Endothelial cell of umbilical vein (primary cell): ENCODE measurements at regions of chr17 and their contacts with region 1.

Region 1: DNA sequence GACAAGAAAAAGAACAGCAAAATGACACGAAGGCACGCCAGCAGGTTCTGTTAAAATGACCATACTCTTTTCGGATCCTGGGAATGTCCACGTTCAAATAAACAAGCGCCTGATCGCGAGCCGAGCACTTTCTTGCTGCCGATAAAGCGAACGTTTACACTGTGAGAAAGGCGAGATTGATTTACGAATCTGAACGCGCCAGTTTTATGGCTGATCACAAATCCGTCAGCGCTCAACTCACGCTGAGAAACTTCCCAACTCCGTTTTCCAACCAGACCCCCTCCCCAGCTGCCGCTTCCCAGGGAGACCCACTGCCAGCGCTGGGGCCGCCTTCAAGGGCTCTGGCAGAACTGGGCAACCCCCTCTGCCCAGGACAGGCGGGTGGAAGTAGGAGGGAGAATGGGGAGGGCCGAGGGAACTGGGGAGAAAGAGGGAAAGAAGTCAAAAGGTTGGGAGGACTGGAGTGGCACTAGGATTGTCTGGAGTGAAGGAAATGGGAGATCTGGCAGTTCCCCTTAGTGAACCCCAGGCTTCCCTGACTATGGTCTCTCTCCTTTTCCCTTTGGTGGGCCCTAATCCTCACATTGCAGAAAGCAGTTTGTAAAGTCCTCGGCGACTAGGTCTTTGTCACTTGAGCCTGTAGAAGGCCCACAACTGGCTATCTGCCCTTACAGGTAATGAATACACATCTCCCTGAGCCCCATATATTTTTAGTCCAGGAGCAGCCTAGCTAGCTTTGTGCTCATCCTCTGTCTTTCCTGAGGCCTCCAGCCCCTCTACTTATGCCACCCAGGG is 6.9 kb downstream of the HOXB4 start:
- DNase-seq: peak; percentile 80
- H3K4me3 ChIP-seq: peak overlapping the region in 2 of 3 experiments; percentile 14 to 53
- H3K27ac ChIP-seq: peak overlapping the region; percentile 68
- H3K4me1 ChIP-seq: peaks cover 94% of the 10 kb centered on the region
- H3K27me3 ChIP-seq: no peaks in the 10 kb centered on the region
- CTCF ChIP-seq: no peak
- POLR2A ChIP-seq: peak; percentile 40

Region 2: DNA sequence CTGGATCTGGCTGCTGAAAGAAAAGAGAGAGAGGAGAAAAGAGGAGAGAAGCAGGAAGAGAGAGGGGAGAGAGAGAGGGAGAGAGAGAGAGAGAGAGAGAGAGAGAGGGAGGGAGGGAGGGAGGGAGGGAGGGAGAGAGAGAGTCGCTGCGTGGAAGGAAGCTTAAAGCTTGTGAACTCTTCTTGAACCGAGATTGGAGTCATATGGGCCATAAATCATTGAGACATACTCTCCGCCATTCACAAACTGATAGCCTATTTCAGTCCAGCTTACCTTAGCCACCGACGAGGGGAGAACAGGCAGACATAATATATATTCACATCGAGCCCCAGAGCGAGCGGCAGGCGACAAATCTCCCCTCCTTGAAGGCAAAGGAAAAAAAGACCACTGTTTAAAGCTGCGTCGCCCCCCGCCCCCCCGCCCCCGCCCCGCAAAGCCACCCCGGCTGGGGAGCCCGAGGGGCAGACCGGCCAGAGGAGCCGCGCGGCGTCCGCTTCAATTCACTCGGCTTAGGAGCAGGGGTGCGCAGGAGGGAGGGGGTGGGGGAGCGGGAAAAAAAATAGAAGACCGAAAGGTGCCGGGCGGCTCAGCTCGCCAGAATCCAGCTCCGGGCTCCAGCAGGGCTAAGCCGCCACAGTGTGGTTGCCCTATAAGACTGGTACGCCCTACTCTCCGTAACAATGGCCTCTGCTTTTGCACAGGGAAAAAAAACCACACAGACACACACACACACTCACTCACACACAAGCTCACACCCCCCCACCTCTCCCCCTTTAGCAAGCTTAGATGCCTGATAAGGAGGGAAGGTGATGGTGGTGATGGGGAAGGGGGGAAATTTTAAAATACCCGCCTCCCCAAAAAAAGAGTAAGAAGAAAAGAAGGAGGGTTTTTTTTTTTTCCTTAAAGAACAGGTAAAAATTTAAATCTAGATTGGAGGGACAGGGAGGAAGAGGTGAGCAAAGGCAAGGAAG is 15.7 kb before region 1 on chr17:
- CTCF ChIA-PET with region 1: interaction called, 23 read pairs
- POLR2A ChIA-PET with region 1: interaction called, 4 read pairs
- dilution Hi-C with region 1: no loop called
- intact Hi-C with region 1: loop called (anchors 2 kb)
- DNase-seq: peak; percentile 89
- H3K4me3 ChIP-seq: peak overlapping the region; percentile 13 to 31 (median 14)
- H3K27ac ChIP-seq: no peak overlapping the region
- H3K4me1 ChIP-seq: peaks cover 28% of the 10 kb centered on the region
- H3K27me3 ChIP-seq: no peaks in the 10 kb centered on the region
- CTCF ChIP-seq: no peak
- POLR2A ChIP-seq: no peak